ENCODE measurements at regions of chr14 and their contacts with region 1.

Region 1: DNA sequence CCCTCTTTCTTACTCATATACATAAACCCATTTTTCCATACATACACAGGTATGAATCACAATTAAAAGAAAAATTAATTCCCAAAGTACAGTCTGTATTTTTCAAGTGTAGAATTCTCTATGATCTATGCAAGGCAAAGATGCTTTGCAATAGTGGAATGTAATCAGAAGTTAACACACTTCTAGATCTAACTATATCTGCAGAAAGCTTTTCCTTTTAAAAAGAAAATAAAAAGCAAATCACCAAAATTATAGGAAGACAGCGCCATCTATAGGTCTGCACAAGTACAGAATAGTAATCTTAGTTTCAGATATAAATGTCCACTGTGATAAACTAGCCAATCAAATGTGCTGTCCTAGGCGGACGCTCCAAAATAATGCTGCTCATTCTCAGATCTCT is 22.0 kb downstream of the SLC25A21 start:
- DNase-seq: no peak
- ATAC-seq: no peak
- H3K4me3 ChIP-seq: no peak overlapping the region
- H3K27ac ChIP-seq: no peak overlapping the region
- H3K4me1 ChIP-seq: no peaks in the 10 kb centered on the region
- H3K27me3 ChIP-seq: no peaks in the 10 kb centered on the region
- CTCF ChIP-seq: peak in 8 of 9 donors; percentile 47 to 75 (median 68)

Region 2: GRCh38 chr14:36619853-36620252 is 530.6 kb before region 1 on chr14:
- intact Hi-C with region 1: no loop called
- DNase-seq: no peak
- ATAC-seq: no peak
- H3K4me3 ChIP-seq: no peak overlapping the region
- H3K27ac ChIP-seq: no peak overlapping the region
- H3K4me1 ChIP-seq: no peaks in the 10 kb centered on the region
- H3K27me3 ChIP-seq: peaks cover 0 to 29% (median 5%) of the 10 kb centered on the region in 7 donors
- CTCF ChIP-seq: no peak

Region 3: GRCh38 chr14:36655963-36656686 is 494.3 kb before region 1 on chr14:
- intact Hi-C with region 1: loop called in 2 of 10 experiments (anchors 5 to 10 kb)
- DNase-seq: no peak
- ATAC-seq: peak in 2 of 8 donors; percentile 16 to 29
- H3K4me3 ChIP-seq: peak overlapping the region in 3 of 10 donors; percentile 7 to 13 (median 11)
- H3K27ac ChIP-seq: no peak overlapping the region
- H3K4me1 ChIP-seq: peaks cover 0 to 50% (median 29%) of the 10 kb centered on the region in 9 donors
- H3K27me3 ChIP-seq: peaks cover 61 to 100% (median 100%) of the 10 kb centered on the region in 7 donors
- CTCF ChIP-seq: peak; percentile 12 to 46 (median 35)

Measured in heart right ventricle (tissue), 16 donors.